ENCODE measurements at regions of chr2 and their contacts with region 1.

Region 1: DNA sequence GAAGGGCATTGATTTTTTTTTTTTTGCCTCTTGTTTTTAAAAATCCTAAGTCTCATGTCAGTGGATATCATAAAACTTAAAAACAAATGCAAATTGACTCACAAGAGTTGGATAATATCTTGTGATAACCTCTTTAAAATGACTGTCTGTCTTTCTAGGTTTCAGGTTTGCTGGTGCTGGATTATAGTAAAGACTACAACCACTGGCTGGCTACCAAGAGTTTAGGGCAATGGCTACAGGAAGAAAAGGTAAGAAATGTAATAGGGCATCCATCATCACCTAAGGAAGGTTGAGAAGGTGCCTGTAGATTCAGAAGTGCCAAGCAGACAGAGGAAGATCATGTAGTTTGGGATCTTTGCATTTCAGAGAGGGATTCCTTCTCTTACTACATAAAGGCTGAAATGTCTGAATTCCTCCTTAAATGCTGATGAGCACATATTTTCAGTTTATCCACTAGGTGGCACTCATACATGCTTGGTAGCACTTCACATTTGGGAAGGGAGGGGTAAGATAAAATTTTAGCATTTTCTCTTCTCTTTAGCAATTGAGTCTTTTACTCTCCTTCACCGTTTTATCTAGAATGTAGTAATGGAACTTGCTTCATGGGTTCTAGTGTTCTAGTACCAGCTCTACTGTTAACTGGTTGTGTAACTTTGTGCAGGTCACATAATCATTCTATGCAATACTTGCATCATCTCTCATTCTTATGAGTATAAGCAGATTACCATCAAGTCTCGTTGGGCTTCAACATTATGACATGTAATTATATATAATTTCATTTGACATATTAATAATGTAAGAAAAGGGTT is 21.1 kb downstream of the CPS1 start:
- DNase-seq: peak; percentile 60
- H3K4me3 ChIP-seq: no peak overlapping the region
- H3K27ac ChIP-seq: no peak overlapping the region
- H3K4me1 ChIP-seq: no peaks in the 10 kb centered on the region
- CTCF ChIP-seq: peak; percentile 91

Region 2: GRCh38 chr2:210445116-210445707 is 132.3 kb before region 1 on chr2:
- CTCF ChIA-PET with region 1: no interaction called
- POLR2A ChIA-PET with region 1: no interaction called
- intact Hi-C with region 1: loop called (anchors 5 kb)
- DNase-seq: peak; percentile 37
- H3K4me3 ChIP-seq: no peak overlapping the region
- H3K27ac ChIP-seq: no peak overlapping the region
- H3K4me1 ChIP-seq: peaks cover 9% of the 10 kb centered on the region
- CTCF ChIP-seq: peak; percentile 95

Region 3: GRCh38 chr2:210503001-210503623 is 74.4 kb before region 1 on chr2:
- CTCF ChIA-PET with region 1: no interaction called
- POLR2A ChIA-PET with region 1: no interaction called
- intact Hi-C with region 1: no loop called
- DNase-seq: peak; percentile 48
- H3K4me3 ChIP-seq: no peak overlapping the region
- H3K27ac ChIP-seq: no peak overlapping the region
- H3K4me1 ChIP-seq: no peaks in the 10 kb centered on the region
- CTCF ChIP-seq: peak; percentile 94